GM13976 (cell line): ENCODE measurements at regions of chr3 and their contacts with region 1.

Region 1: GRCh38 chr3:136075218-136075808 is 109.8 kb downstream of the PPP2R3A start:
- DNase-seq: peak; percentile 64
- CTCF ChIP-seq: peak; percentile 85

Region 2: DNA sequence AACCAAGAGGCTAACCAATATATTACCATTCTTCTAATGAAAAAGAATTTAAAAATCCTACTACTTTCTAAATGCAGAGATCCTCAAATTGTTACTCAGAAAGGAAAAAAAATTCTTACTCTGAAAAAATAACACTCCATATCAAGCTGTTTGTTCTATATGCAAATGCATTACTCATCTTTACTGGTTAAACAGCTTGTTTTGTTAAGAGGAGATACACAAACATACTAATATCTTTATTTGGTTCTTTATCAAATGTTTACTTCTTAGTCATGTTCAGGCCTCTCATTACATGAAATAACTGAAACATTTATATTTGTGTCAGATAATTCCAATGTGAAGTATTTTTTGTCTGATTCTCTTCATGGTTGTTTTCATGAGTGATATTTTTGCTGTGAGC is 321.6 kb after region 1 on chr3:
- in situ Hi-C with region 1: loop called (anchors 10 kb)
- DNase-seq: no peak
- CTCF ChIP-seq: no peak

Region 3: DNA sequence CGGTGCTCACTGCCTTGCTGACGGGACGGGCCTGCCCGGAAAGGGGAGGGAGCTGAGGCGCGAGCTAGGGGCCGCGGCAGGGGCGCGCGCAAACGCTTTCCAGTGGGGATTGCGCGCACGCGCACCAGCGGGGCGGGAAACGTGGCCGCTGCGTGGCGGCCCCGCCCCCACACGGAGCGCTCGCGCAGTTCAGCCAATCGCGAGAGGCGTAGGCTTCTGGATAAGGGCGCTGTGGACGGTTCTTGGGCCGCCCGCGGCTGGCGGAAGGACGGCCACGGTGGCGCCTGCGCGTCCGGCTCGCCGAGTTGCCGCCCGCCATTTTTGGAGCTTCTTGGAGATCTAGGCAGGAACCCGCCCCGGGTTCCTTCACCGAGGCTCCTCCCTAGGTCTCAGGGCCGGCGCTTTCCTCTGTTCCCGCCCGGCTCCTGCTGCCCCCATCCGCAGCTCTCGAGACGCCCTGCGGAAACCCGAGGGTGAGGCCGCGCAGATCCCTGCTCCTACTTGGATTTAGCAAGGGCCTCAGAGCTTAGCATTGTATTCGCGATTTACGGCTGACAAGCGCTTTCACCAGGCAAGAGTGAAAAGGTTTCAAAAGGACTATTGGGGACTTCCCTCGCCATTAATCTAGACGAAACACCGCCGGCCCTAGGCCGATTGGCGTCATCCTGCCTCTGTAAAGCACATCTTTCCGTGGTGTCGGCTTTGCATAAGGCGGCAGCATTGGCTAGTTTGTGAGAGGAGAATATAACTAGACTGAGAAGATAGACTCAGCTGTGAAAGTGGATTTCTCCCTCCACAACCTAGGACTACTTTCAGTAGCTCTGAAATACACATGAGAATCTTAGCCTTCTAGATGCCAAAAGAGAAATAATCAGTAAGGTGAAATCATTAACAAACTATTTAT is 677.4 kb after region 1 on chr3:
- in situ Hi-C with region 1: loop called (anchors 10 kb)
- DNase-seq: peak; percentile 92
- CTCF ChIP-seq: peak; percentile 18